ENCODE measurements at regions of chr14 and their contacts with region 1.

Region 1: GRCh38 chr14:70934502-70935134 is 27.4 kb downstream of the PCNX1 start:
- DNase-seq: no peak
- H3K4me3 ChIP-seq: no peak overlapping the region
- H3K27ac ChIP-seq: peak overlapping the region; percentile 11 to 60 (median 39)
- H3K4me1 ChIP-seq: peaks cover 3 to 26% (median 14%) of the 10 kb centered on the region in 4 donors
- H3K27me3 ChIP-seq: no peaks in the 10 kb centered on the region
- CTCF ChIP-seq: no peak
- EP300 ChIP-seq: no peak
- POLR2A ChIP-seq: no peak

Region 2: GRCh38 chr14:70894868-70895267 is 39.8 kb before region 1 on chr14:
- in situ Hi-C with region 1: no loop called
- intact Hi-C with region 1: loop called (anchors 1 kb)
- DNase-seq: no peak
- H3K4me3 ChIP-seq: no peak overlapping the region
- H3K27ac ChIP-seq: no peak overlapping the region
- H3K4me1 ChIP-seq: peaks cover 0 to 4% (median 0%) of the 10 kb centered on the region in 4 donors
- H3K27me3 ChIP-seq: no peaks in the 10 kb centered on the region
- CTCF ChIP-seq: no peak
- EP300 ChIP-seq: no peak
- POLR2A ChIP-seq: no peak

Measured in transverse colon (tissue), 4 donors.